ENCODE measurements at regions of chr2 and their contacts with region 1.

Region 1: DNA sequence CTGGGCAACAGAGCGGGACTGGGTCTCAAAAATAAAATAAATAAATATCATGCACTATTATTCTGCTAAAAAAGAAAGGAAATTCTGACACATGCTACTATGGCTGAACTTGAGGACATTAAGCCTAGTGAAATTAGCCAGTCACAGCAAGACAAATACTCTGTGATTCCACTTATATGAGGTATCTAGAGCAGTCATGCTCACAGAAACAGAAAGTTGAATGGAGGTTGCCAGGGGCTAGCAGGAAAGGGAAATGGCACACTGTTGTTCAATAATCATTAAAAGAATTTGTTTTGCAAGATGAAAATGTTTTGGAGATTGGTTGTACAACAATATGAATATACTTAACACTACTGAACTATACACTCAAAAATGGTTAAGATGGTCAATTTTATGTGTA is 60.8 kb downstream of the NCKAP1 start:
- DNase-seq: no peak
- H3K4me3 ChIP-seq: no peak overlapping the region
- H3K27ac ChIP-seq: no peak overlapping the region
- H3K4me1 ChIP-seq: no peaks in the 10 kb centered on the region
- H3K27me3 ChIP-seq: no peaks in the 10 kb centered on the region
- CTCF ChIP-seq: no peak
- EP300 ChIP-seq: no peak
- POLR2A ChIP-seq: no peak

Region 2: GRCh38 chr2:182705761-182706160 is 271.7 kb before region 1 on chr2:
- intact Hi-C with region 1: no loop called
- DNase-seq: no peak
- H3K4me3 ChIP-seq: no peak overlapping the region
- H3K27ac ChIP-seq: no peak overlapping the region
- H3K4me1 ChIP-seq: no peaks in the 10 kb centered on the region
- H3K27me3 ChIP-seq: peaks cover 3% of the 10 kb centered on the region
- CTCF ChIP-seq: no peak
- EP300 ChIP-seq: no peak
- POLR2A ChIP-seq: no peak

Region 3: GRCh38 chr2:182715896-182716668 is 261.4 kb before region 1 on chr2 and contains the start of gene DNAJC10:
- intact Hi-C with region 1: no loop called
- DNase-seq: peak; percentile 84 to 90 (median 89)
- H3K4me3 ChIP-seq: peak within 1 kb of the TSS; percentile 80
- H3K27ac ChIP-seq: peak within 1 kb of the TSS; percentile 71 to 84
- H3K4me1 ChIP-seq: peaks cover 1% of the 10 kb centered on the region
- H3K27me3 ChIP-seq: no peaks in the 10 kb centered on the region
- CTCF ChIP-seq: no peak
- EP300 ChIP-seq: no peak
- POLR2A ChIP-seq: no peak
- total RNA-seq, gene DNAJC10: 31.7 to 103 (median 68.4) TPM

Region 4: GRCh38 chr2:182763311-182763912 is 214.1 kb before region 1 on chr2:
- intact Hi-C with region 1: loop called in 1 of 4 experiments (anchors 10 kb)
- DNase-seq: peak in 2 of 5 donors; percentile 14 to 23
- H3K4me3 ChIP-seq: no peak overlapping the region
- H3K27ac ChIP-seq: peak overlapping the region in 1 of 2 donors; percentile 32
- H3K4me1 ChIP-seq: peaks cover 4% of the 10 kb centered on the region
- H3K27me3 ChIP-seq: no peaks in the 10 kb centered on the region
- CTCF ChIP-seq: peak in 2 of 3 donors; percentile 46 to 53
- EP300 ChIP-seq: no peak
- POLR2A ChIP-seq: no peak

Region 5: DNA sequence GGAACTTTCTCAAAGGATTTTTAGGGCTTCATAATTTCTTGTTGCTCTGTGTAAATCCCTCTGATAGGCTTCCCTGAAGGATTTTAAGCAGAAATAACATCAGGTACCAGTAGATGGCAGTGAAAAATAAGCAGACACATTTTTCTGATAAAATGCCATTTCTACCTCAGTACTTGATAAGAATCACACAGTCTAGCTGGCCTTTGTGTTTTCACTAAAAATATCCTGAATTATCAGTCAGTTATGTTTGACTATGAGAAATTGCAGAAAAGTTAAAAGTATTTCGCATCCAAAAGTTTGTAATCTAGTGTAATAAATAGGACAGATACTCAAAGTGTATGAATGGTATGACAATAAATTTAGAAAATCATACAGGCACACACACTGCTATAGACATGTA is 192.7 kb before region 1 on chr2:
- intact Hi-C with region 1: loop called in 1 of 4 experiments (anchors 10 kb)
- DNase-seq: no peak
- H3K4me3 ChIP-seq: no peak overlapping the region
- H3K27ac ChIP-seq: no peak overlapping the region
- H3K4me1 ChIP-seq: no peaks in the 10 kb centered on the region
- H3K27me3 ChIP-seq: no peaks in the 10 kb centered on the region
- CTCF ChIP-seq: peak in 1 of 3 donors; percentile 10
- EP300 ChIP-seq: no peak
- POLR2A ChIP-seq: no peak

Measured in ovary (tissue), 10 donors.